GM12878 (cell line): ENCODE measurements at regions of chr1 and their contacts with region 1.

Region 1: GRCh38 chr1:205658943-205659581 is 21.2 kb downstream of the SLC45A3 start:
- DNase-seq: no peak
- ATAC-seq: peak; percentile 95
- H3K4me3 ChIP-seq: no peak overlapping the region
- H3K27ac ChIP-seq: no peak overlapping the region
- H3K4me1 ChIP-seq: no peaks in the 10 kb centered on the region; the same call in 1 of the 2 replicates
- H3K27me3 ChIP-seq: no peaks in the 10 kb centered on the region
- CTCF ChIP-seq: peak; percentile 93 to 95 (median 94)
- EP300 ChIP-seq: no peak
- POLR2A ChIP-seq: no peak
- RAD21 ChIP-seq: peak; percentile 96

Region 2: DNA sequence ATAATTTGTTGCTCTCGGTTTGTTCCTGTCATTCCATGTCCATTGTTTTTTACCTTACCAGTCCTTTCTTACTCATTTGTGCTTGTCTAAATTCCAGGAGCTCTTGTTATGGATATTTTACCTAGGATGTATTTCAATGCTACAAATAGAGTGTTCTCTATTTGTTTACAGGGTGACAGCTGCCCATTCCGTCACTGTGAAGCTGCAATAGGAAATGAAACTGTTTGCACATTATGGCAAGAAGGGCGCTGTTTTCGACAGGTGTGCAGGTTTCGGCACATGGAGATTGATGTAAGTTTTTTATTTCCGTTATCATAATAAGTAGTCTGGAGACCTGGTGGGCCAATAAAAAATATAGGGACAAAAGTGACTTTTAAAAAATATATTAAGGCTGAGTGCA is 1840.7 kb before region 1 on chr1:
- CTCF ChIA-PET with region 1: no interaction called
- POLR2A ChIA-PET with region 1: no interaction called
- RAD21 ChIA-PET with region 1: no interaction called
- SMC1A ChIA-PET with region 1: no interaction called
- in situ Hi-C with region 1: no loop called
- intact Hi-C with region 1: no loop called
- DNase-seq: no peak
- ATAC-seq: no peak
- H3K4me3 ChIP-seq: no peak overlapping the region
- H3K27ac ChIP-seq: no peak overlapping the region
- H3K4me1 ChIP-seq: no peaks in the 10 kb centered on the region
- H3K27me3 ChIP-seq: no peaks in the 10 kb centered on the region
- CTCF ChIP-seq: no peak
- EP300 ChIP-seq: no peak
- POLR2A ChIP-seq: no peak
- RAD21 ChIP-seq: no peak

Region 3: GRCh38 chr1:205444931-205445645 is 214.0 kb before region 1 on chr1:
- CTCF ChIA-PET with region 1: no interaction called
- POLR2A ChIA-PET with region 1: no interaction called
- RAD21 ChIA-PET with region 1: no interaction called
- SMC1A ChIA-PET with region 1: no interaction called
- in situ Hi-C with region 1: no loop called
- intact Hi-C with region 1: no loop called
- DNase-seq: no peak
- ATAC-seq: no peak
- H3K4me3 ChIP-seq: no peak overlapping the region
- H3K27ac ChIP-seq: no peak overlapping the region
- H3K4me1 ChIP-seq: peaks cover 24% of the 10 kb centered on the region
- H3K27me3 ChIP-seq: no peaks in the 10 kb centered on the region; a peak in 1 of 4 replicates
- CTCF ChIP-seq: no peak
- EP300 ChIP-seq: no peak
- POLR2A ChIP-seq: no peak
- RAD21 ChIP-seq: no peak

Region 4: DNA sequence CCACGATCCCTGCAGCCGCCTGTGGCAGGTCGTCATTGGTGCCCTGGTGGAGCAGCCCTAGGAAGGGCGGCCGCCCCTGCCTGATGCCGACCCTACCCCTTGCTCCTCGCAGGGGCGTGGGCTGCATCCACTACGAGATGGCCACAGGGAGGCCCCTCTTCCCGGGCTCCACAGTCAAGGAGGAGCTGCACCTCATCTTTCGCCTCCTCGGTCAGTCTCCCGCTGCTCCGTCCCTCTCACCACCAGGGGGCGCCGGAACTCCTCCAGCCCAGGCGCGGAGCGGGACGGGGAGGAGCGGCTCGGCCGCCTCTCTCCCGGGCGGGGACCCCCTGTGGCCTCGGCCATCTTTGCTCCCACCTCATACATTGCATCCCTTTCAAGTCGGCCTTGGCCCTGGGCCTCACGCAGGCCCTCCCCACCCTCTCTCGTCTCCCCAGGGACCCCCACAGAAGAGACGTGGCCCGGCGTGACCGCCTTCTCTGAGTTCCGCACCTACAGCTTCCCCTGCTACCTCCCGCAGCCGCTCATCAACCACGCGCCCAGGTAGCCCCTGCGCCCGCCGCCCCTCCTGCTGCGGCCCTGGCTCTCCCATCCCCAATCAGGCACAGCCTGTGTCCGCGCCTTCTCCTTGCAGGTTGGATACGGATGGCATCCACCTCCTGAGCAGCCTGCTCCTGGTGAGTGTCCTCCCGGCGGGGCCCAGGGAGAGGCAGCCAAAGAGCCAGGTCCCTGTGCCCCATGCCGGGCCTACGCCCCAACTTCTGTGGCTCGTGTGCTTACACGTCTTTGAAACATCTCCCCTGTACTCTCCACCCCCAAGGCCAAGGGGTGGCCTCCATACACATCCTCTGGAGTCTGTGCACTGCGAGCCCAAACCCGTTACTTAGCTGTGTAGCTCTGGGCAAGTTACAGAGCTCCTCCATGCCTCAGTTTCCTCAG is 129.9 kb before region 1 on chr1:
- CTCF ChIA-PET with region 1: interaction called, 217 read pairs
- POLR2A ChIA-PET with region 1: interaction called, 3 read pairs
- RAD21 ChIA-PET with region 1: interaction called, 78 read pairs
- SMC1A ChIA-PET with region 1: interaction called, 61 read pairs
- in situ Hi-C with region 1: loop called (anchors 5 kb)
- intact Hi-C with region 1: loop called (anchors 1 kb)
- DNase-seq: no peak
- ATAC-seq: peak; percentile 93
- H3K4me3 ChIP-seq: no peak overlapping the region
- H3K27ac ChIP-seq: no peak overlapping the region
- H3K4me1 ChIP-seq: no peaks in the 10 kb centered on the region
- H3K27me3 ChIP-seq: peaks cover 2 to 3% of the 10 kb centered on the region in 2 experiments; a peak in 3 of 4 replicates
- CTCF ChIP-seq: peak; percentile 78 to 96 (median 92)
- EP300 ChIP-seq: no peak
- POLR2A ChIP-seq: no peak
- RAD21 ChIP-seq: peak; percentile 78

Region 5: GRCh38 chr1:205631727-205632373 is 27.2 kb before region 1 on chr1 and contains the start of gene ELK4:
- CTCF ChIA-PET with region 1: interaction called, 227 read pairs
- POLR2A ChIA-PET with region 1: interaction called, 12 read pairs
- RAD21 ChIA-PET with region 1: interaction called, 129 read pairs
- SMC1A ChIA-PET with region 1: interaction called, 118 read pairs
- in situ Hi-C with region 1: no loop called
- intact Hi-C with region 1: no loop called
- DNase-seq: peak; percentile 87
- ATAC-seq: peak; percentile 73
- H3K4me3 ChIP-seq: peak within 1 kb of the TSS; percentile 93
- H3K27ac ChIP-seq: peak within 1 kb of the TSS; percentile 74
- H3K4me1 ChIP-seq: peaks cover 13% of the 10 kb centered on the region
- H3K27me3 ChIP-seq: no peaks in the 10 kb centered on the region
- CTCF ChIP-seq: peak; percentile 70 to 98 (median 86); a peak in 5 of 6 replicates
- EP300 ChIP-seq: no peak; a peak in 1 of 4 replicates
- POLR2A ChIP-seq: peak; percentile 93
- RAD21 ChIP-seq: peak; percentile 79
- polyA plus RNA-seq, gene ELK4: 5.2 to 11.9 TPM

Region 6: DNA sequence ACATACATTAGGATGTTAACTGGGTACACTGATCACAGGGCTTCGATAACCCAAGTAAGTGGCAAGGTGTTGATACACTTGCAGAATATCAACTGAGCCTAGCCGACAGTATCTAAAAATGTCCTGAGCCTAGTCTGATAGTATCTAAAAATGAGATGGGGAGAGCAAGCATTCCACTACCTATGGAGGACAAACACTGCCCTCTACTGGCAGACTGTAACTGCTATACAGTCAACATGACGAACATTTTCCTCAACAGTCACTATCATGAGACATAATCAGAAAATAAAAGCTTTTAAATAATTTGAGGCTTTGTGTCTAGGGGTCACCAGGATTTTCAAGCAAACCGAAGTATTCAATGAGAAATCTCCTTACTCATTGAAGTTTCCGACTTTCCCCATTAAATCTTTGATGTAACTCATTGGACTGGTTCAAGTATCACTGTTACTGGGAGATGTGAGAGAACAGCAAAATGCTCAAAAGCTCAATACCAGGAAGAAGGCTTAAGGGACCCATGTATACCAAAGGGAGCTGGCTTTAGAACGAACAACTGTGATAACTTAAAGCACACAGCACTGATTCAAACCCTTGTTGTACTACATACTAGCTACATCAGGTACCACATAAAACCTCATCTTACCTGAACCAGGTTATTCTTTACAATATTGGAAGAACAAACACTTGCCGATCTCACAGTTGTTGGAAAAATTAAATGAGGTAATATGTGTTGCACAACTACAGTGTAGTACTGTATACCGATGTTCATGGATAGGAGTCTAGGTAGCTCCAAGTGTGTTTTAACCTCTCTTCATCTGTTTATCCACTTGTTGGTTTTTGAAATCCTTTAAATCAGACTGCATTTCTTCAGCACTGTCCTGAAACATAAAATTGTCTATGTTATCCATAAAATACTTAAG is 52.3 kb after region 1 on chr1:
- CTCF ChIA-PET with region 1: interaction called, 1,339 read pairs
- POLR2A ChIA-PET with region 1: interaction called, 89 read pairs
- RAD21 ChIA-PET with region 1: interaction called, 538 read pairs
- SMC1A ChIA-PET with region 1: interaction called, 1,008 read pairs
- in situ Hi-C with region 1: loop called (anchors 5 kb)
- intact Hi-C with region 1: loop called (anchors 1 kb)
- DNase-seq: peak; percentile 62
- ATAC-seq: peak; percentile 99
- H3K4me3 ChIP-seq: no peak overlapping the region
- H3K27ac ChIP-seq: no peak overlapping the region
- H3K4me1 ChIP-seq: no peaks in the 10 kb centered on the region
- H3K27me3 ChIP-seq: no peaks in the 10 kb centered on the region
- CTCF ChIP-seq: peak; percentile 77 to 95 (median 92)
- EP300 ChIP-seq: no peak
- POLR2A ChIP-seq: no peak
- RAD21 ChIP-seq: peak; percentile 91

Region 7: GRCh38 chr1:205783904-205784303 is 124.8 kb after region 1 on chr1:
- CTCF ChIA-PET with region 1: interaction called, 18 read pairs
- POLR2A ChIA-PET with region 1: no interaction called
- RAD21 ChIA-PET with region 1: interaction called, 16 read pairs
- SMC1A ChIA-PET with region 1: interaction called, 15 read pairs
- in situ Hi-C with region 1: no loop called
- intact Hi-C with region 1: loop called (anchors 5 kb)
- DNase-seq: no peak
- ATAC-seq: no peak
- H3K4me3 ChIP-seq: no peak overlapping the region
- H3K27ac ChIP-seq: no peak overlapping the region
- H3K4me1 ChIP-seq: no peaks in the 10 kb centered on the region
- H3K27me3 ChIP-seq: peaks cover 0 to 6% of the 10 kb centered on the region in 2 experiments; a peak in 1 of 4 replicates
- CTCF ChIP-seq: no peak
- EP300 ChIP-seq: no peak
- POLR2A ChIP-seq: no peak
- RAD21 ChIP-seq: no peak

Region 8: GRCh38 chr1:205967555-205968335 is 308.7 kb after region 1 on chr1:
- CTCF ChIA-PET with region 1: interaction called, 9 read pairs
- POLR2A ChIA-PET with region 1: no interaction called
- RAD21 ChIA-PET with region 1: interaction called, 3 read pairs
- SMC1A ChIA-PET with region 1: interaction called, 11 read pairs
- in situ Hi-C with region 1: no loop called
- intact Hi-C with region 1: no loop called
- DNase-seq: no peak
- ATAC-seq: no peak
- H3K4me3 ChIP-seq: no peak overlapping the region
- H3K27ac ChIP-seq: no peak overlapping the region
- H3K4me1 ChIP-seq: no peaks in the 10 kb centered on the region
- H3K27me3 ChIP-seq: peaks cover 0 to 2% of the 10 kb centered on the region in 2 experiments; a peak in 3 of 4 replicates
- CTCF ChIP-seq: no peak
- EP300 ChIP-seq: no peak
- POLR2A ChIP-seq: no peak
- RAD21 ChIP-seq: no peak